ENCODE measurements at regions of chr4 and their contacts with region 1.

Region 1: GRCh38 chr4:40056716-40057585 is at the start of gene N4BP2:
- DNase-seq: peak; percentile 96
- H3K4me3 Mint-ChIP-seq: peak within 1 kb of the TSS; percentile 78
- H3K27ac Mint-ChIP-seq: peak within 1 kb of the TSS; percentile 93
- H3K4me1 Mint-ChIP-seq: peaks cover 11% of the 10 kb centered on the region
- H3K27me3 Mint-ChIP-seq: no peaks in the 10 kb centered on the region
- CTCF ChIP-seq: peak; percentile 93
- total RNA-seq, gene N4BP2: 8.3 and 8.8 TPM in 2 replicates

Region 2: DNA sequence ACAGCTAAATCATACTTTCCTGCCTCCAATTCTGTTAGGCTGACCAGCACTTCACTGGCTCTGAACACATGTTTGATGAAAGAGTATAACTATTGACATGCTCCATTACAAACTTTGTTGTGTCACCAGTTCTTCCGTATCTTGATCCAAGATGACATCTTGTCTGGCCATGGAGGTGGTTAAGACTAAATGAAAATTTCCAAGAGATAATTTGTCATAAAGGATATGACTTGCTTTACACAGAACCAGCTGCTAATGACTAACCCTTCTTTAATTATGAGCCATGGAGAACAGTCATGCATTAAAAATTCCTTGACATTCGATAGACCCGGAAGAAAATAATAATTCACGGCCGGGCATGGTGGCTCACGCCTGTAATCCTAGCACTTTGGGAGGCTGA is 18.0 kb before region 1 on chr4:
- CTCF ChIA-PET with region 1: interaction called, 11 read pairs
- POLR2A ChIA-PET with region 1: interaction called, 4 read pairs
- intact Hi-C with region 1: no loop called
- DNase-seq: peak; percentile 14
- H3K4me3 Mint-ChIP-seq: no peak overlapping the region
- H3K27ac Mint-ChIP-seq: no peak overlapping the region
- H3K4me1 Mint-ChIP-seq: peaks cover 6% of the 10 kb centered on the region
- H3K27me3 Mint-ChIP-seq: no peaks in the 10 kb centered on the region
- CTCF ChIP-seq: no peak

Region 3: DNA sequence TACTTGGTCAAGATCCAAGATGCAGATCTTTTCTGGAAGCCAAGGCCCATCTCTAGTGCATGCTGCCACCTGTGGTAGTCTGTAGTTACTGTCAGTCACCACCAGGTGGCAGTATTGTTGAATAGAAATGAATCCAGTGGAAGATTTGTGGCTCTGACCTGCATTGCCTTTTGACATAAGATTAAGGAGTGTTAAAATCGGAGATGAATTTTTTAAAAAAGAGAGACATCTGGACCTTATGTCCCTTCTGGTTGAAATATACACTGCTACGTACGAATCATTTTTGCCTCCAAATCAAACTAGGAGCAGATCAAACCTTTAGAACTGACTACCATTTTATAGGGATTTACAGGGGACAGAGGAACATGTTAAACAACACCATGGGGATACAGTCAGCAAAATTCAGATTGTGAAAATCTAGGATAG is 93.0 kb after region 1 on chr4:
- CTCF ChIA-PET with region 1: no interaction called
- POLR2A ChIA-PET with region 1: interaction called, 4 read pairs
- intact Hi-C with region 1: loop called (anchors 1 kb)
- DNase-seq: peak; percentile 86
- H3K4me3 Mint-ChIP-seq: no peak overlapping the region
- H3K27ac Mint-ChIP-seq: no peak overlapping the region
- H3K4me1 Mint-ChIP-seq: no peaks in the 10 kb centered on the region
- H3K27me3 Mint-ChIP-seq: no peaks in the 10 kb centered on the region
- CTCF ChIP-seq: peak; percentile 90

Region 4: DNA sequence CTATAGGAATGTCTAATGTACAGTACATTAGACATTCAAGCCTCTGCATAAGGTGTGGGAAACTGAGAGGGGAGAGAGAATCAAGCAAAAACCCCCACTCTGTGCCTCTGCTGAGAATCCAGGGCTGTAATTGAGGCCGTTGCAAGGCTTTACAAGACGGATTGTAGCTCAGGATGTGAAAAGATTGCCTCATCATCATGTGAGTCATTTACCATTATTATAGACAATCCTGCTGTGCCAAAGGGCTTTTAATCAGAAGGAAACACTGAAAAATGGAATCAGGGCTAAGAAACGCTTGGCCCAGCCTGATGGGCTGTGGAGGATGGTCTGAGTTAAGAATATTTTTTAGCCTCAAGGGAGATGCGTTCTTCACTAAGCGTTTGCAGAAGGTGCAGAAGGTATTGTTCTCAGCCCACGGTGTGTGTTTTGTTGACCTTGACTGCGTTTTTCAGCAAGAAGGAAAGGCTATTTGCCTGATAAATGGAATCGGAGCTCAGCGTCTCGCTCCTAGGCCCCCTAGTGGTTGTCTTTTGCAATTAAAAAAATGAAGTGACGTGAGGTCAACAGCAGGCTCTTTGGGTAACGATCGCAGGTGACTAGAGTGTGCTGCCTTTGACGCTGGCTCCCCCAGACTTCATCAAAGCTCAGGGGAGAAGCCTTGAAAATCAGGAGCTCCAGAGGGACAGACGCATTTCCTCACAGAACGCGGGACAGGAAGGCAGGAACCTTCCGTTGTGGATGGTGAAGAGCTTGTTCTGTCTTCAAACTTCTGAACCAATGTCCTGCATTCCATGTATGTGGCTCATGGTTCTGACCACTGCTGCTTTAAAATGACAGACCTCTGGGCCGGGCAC is 260.1 kb after region 1 on chr4:
- CTCF ChIA-PET with region 1: interaction called, 6 read pairs
- POLR2A ChIA-PET with region 1: interaction called, 42 read pairs
- intact Hi-C with region 1: loop called (anchors 2 kb)
- DNase-seq: peak; percentile 95
- H3K4me3 Mint-ChIP-seq: peak overlapping the region; percentile 85
- H3K27ac Mint-ChIP-seq: peak overlapping the region; percentile 100
- H3K4me1 Mint-ChIP-seq: peaks cover 55% of the 10 kb centered on the region
- H3K27me3 Mint-ChIP-seq: no peaks in the 10 kb centered on the region
- CTCF ChIP-seq: peak; percentile 61

Region 5: DNA sequence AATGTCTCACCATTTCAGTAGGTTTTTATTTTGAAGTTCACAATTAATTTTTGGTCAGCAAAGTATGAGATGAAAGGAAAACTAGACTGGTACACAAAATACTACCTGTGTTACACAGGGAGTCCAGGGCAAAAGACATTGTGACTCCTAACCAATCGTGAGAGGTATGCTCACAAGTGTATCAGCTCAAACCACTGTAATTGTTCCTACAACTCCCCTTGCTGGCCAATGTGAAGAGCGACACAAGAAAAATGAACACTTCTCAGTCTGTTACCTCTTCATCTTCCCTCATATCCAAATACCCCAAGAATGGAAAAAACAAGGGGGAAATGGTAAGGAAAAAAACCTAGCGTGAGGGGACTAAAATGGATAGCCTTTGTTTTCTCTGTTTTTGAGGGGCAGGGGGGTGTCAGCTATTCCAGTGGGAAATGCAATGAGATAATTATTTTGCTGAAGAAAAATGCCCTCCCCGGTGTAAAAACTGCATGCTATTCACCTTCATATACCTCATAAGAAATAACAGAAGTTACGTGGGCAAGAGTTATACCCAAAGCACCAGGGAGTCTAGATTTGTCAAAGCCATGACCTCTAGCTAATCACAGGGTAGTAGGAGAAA is 662.2 kb after region 1 on chr4:
- CTCF ChIA-PET with region 1: no interaction called
- POLR2A ChIA-PET with region 1: interaction called, 3 read pairs
- intact Hi-C with region 1: loop called (anchors 1 kb)
- DNase-seq: peak; percentile 74
- H3K4me3 Mint-ChIP-seq: no peak overlapping the region
- H3K27ac Mint-ChIP-seq: no peak overlapping the region
- H3K4me1 Mint-ChIP-seq: no peaks in the 10 kb centered on the region
- H3K27me3 Mint-ChIP-seq: no peaks in the 10 kb centered on the region
- CTCF ChIP-seq: peak; percentile 60